ENCODE measurements at regions of chr2 and their contacts with region 1.

Region 1: DNA sequence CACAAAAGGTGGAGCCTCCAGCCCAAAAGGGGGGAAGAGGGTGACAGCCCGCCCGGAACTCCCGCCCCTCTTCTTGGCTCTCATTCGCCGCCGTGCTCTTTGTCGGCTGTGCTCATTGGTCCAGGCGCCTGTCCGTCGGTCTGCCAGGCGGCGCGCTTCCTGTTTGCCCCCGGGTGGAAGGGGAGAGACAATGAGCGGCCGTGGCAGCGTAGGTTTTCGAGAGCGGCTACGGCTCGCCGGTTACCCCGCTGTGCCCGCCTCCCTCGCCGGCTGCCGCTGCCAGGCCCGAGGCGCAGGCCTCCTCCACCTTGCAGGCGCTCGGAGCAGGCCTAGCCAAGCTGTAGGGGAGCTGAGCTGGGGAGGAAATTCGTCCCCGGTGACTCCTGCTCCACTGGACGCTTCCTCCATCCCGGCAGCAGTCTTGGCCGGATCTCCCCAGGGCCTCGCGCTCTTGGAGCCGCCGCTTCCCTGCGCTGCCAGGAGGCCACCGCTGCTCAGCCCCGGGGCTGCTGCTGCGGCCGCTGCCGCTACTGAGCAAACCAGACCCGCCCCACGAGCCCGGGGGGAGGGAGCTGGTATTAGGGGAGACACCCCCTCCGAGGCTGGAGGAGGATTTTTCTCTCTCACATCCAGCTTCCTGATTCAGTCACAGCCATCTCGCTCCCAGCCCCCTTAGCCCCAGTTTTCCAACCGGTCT is at the start of gene SP3:
- DNase-seq: peak; percentile 97
- H3K4me3 Mint-ChIP-seq: peak within 1 kb of the TSS; percentile 86
- H3K27ac Mint-ChIP-seq: peak within 1 kb of the TSS; percentile 99
- H3K4me1 Mint-ChIP-seq: peaks cover 21% of the 10 kb centered on the region
- H3K27me3 Mint-ChIP-seq: no peaks in the 10 kb centered on the region
- total RNA-seq, gene SP3: 89.8 to 99.7 TPM

Region 2: DNA sequence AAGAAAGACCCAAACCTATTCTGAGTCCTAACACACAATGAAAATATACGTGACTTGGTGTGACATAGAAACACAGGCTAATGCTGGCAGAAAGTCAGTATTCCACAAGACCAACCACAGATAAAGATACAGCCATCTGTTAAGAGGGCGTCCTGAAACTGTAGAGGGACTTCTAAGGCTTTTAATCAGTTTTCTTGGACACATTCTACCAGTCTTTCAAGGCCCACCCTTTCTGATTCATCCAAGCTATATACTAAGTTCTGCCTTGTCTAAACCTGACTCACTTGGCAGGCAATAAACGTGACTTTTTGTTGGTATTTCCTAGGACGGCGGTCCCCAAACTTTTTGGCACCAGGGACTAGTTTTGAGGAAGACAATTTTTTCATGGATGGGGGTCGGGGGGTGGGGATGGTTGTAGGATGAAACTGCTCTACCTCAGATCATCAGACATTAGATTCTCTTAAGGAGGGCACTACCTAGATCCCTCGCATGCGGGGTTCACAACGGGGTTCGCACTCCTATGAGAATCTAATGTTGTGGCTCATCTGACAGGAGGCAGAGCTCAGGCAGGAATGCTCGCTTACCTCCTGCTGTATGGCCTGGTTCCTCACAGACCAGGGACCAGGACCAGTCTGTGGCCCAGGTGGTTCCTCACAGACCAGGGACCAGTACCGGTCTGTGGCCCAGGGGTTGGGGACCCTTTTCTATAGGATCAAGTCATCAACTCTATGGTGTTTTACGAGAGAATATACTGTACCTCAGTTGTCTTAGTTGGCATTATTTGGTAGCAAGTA is 61.7 kb before region 1 on chr2:
- CTCF ChIA-PET with region 1: no interaction called
- intact Hi-C with region 1: loop called (anchors 2 kb)
- DNase-seq: no peak
- H3K4me3 Mint-ChIP-seq: no peak overlapping the region
- H3K27ac Mint-ChIP-seq: no peak overlapping the region
- H3K4me1 Mint-ChIP-seq: peaks cover 3% of the 10 kb centered on the region
- H3K27me3 Mint-ChIP-seq: no peaks in the 10 kb centered on the region

Region 3: GRCh38 chr2:173978447-173978846 is 13.0 kb after region 1 on chr2:
- CTCF ChIA-PET with region 1: interaction called, 4 read pairs
- intact Hi-C with region 1: loop called (anchors 2 kb)
- DNase-seq: peak; percentile 34
- H3K4me3 Mint-ChIP-seq: no peak overlapping the region
- H3K27ac Mint-ChIP-seq: peak overlapping the region; percentile 8
- H3K4me1 Mint-ChIP-seq: peaks cover 15% of the 10 kb centered on the region
- H3K27me3 Mint-ChIP-seq: no peaks in the 10 kb centered on the region

Region 4: DNA sequence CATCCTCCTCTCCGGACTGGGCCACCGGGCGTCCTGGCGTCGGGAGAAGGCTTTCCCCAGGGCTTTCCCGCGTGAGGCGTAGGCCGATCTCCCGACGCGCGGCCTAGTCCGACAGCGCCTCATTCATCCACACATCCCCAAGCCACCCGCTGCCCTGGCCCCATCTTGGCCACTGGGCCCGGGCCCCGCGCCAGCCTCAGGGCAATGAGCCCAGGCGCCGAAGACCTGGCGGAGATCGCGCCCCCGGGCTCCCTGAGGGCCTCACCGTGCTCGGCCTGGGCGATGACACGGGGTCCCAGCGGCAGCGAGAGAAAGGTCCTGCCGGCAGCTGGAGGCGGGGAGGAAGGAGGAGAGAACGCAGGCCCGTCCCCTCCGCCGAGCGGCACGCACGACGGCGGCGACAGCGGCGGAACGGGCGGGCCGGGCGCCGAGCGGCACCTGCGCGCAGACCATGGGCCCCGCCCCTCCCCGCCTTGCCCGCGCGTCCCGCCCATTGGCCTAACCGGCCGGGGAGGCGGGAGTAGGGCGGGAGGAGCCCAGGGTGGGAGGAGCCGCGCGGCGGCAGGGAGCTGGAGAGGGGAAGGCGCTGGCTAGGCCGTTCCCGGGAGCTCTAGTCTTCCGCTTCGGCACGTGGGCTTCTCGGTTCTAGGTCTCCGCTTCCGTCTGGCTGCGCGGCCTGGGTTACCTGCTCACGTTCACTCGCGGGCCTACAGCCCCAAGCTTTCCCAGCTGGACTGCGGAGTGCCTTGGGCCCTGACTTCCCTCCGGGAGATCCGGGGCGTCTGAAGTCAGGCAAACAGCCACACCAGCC is 282.9 kb after region 1 on chr2 and contains the start of gene OLA1:
- CTCF ChIA-PET with region 1: no interaction called
- intact Hi-C with region 1: loop called (anchors 1 kb)
- DNase-seq: peak; percentile 97
- H3K4me3 Mint-ChIP-seq: peak within 1 kb of the TSS; percentile 84
- H3K27ac Mint-ChIP-seq: peak within 1 kb of the TSS; percentile 79
- H3K4me1 Mint-ChIP-seq: peaks cover 25% of the 10 kb centered on the region
- H3K27me3 Mint-ChIP-seq: no peaks in the 10 kb centered on the region
- total RNA-seq, gene OLA1: 140 to 142 TPM

Region 5: GRCh38 chr2:174593574-174594203 is 628.2 kb after region 1 on chr2:
- CTCF ChIA-PET with region 1: no interaction called
- intact Hi-C with region 1: loop called (anchors 2 kb)
- DNase-seq: peak; percentile 87
- H3K4me3 Mint-ChIP-seq: peak overlapping the region; percentile 77
- H3K27ac Mint-ChIP-seq: peak overlapping the region; percentile 99
- H3K4me1 Mint-ChIP-seq: peaks cover 52% of the 10 kb centered on the region
- H3K27me3 Mint-ChIP-seq: no peaks in the 10 kb centered on the region